Activated naive CD4-positive, alpha-beta T cell treated with anti-CD3 and anti-CD28 coated beads for 36 hours (primary cell): ENCODE measurements at regions of chr19 and their contacts with region 1.

Region 1: DNA sequence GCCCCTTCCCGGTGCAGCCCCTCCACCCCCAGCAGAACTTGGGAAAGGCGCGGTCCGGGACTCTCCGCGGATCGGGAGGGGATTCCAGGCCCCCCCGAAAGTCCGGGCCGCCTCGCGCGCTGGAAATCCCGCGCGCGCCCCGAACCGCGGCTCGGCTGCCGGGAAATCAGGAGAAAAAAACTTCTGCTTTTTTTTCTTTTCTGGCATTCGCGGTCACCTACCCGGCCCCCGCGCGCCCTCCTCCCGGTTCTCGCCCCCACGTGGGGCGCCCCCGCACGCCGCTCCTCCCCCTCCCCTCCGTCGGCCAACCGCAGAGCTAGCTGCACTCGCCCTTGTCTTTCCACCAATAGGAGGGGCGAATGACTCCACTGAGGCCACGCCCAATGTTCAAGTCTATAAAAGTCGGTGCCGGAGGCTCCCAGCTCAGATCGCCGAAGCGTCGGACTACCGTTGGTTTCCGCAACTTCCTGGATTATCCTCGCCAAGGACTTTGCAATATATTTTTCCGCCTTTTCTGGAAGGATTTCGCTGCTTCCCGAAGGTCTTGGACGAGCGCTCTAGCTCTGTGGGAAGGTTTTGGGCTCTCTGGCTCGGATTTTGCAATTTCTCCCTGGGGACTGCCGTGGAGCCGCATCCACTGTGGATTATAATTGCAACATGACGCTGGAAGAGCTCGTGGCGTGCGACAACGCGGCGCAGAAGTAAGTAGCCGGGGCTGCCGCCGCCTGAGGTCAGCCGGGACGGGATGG is at the start of gene GADD45B:
- DNase-seq: peak; percentile 98
- H3K4me3 Mint-ChIP-seq: peak within 1 kb of the TSS; percentile 99
- H3K27ac Mint-ChIP-seq: peak within 1 kb of the TSS; percentile 97
- H3K4me1 Mint-ChIP-seq: peaks cover 22% of the 10 kb centered on the region
- H3K27me3 Mint-ChIP-seq: no peaks in the 10 kb centered on the region
- total RNA-seq, gene GADD45B: 107 to 112 TPM

Region 2: GRCh38 chr19:2507109-2507508 is 31.2 kb after region 1 on chr19:
- CTCF ChIA-PET with region 1: interaction called, 4 read pairs
- intact Hi-C with region 1: loop called (anchors 1 kb)
- DNase-seq: peak; percentile 75
- H3K4me3 Mint-ChIP-seq: peak overlapping the region; percentile 39
- H3K27ac Mint-ChIP-seq: no peak overlapping the region
- H3K4me1 Mint-ChIP-seq: peaks cover 26% of the 10 kb centered on the region
- H3K27me3 Mint-ChIP-seq: peaks cover 2% of the 10 kb centered on the region

Region 3: DNA sequence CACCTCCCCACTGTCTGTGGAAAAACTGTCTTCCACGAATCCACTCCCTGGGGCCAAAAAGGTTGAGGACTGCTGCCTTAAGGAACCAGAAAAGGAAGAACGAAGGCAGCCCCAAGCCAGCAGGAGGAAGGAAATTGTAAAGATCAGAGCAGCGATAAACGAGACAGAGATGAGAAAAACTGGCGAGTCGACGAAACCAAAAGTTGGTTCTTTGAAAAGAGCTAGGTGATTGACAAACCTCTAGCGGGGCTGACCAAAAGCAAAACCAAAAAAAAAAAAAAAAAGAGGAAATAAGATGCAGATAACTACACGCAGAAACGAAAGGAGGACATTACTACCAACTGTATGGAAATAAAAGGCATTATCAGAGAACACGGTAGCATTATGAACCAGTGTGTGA is 77.0 kb after region 1 on chr19:
- CTCF ChIA-PET with region 1: interaction called, 5 read pairs
- intact Hi-C with region 1: loop called (anchors 1 kb)
- DNase-seq: peak; percentile 78
- H3K4me3 Mint-ChIP-seq: peak overlapping the region; percentile 64
- H3K27ac Mint-ChIP-seq: peak overlapping the region; percentile 81
- H3K4me1 Mint-ChIP-seq: peaks cover 17% of the 10 kb centered on the region
- H3K27me3 Mint-ChIP-seq: no peaks in the 10 kb centered on the region

Region 4: GRCh38 chr19:2578901-2579677 is 103.2 kb after region 1 on chr19:
- CTCF ChIA-PET with region 1: interaction called, 10 read pairs
- intact Hi-C with region 1: loop called (anchors 1 kb)
- DNase-seq: peak; percentile 80
- H3K4me3 Mint-ChIP-seq: peak overlapping the region; percentile 53
- H3K27ac Mint-ChIP-seq: no peak overlapping the region
- H3K4me1 Mint-ChIP-seq: peaks cover 3% of the 10 kb centered on the region
- H3K27me3 Mint-ChIP-seq: peaks cover 3% of the 10 kb centered on the region

Region 5: GRCh38 chr19:2610637-2611482 is 135.0 kb after region 1 on chr19:
- CTCF ChIA-PET with region 1: interaction called, 66 read pairs
- intact Hi-C with region 1: loop called (anchors 1 kb)
- DNase-seq: peak; percentile 95
- H3K4me3 Mint-ChIP-seq: peak overlapping the region; percentile 81
- H3K27ac Mint-ChIP-seq: peak overlapping the region; percentile 81
- H3K4me1 Mint-ChIP-seq: peaks cover 46% of the 10 kb centered on the region
- H3K27me3 Mint-ChIP-seq: peaks cover 4% of the 10 kb centered on the region

Region 6: GRCh38 chr19:2636897-2637683 is 161.2 kb after region 1 on chr19:
- CTCF ChIA-PET with region 1: interaction called, 5 read pairs
- intact Hi-C with region 1: loop called (anchors 1 kb)
- DNase-seq: peak; percentile 83
- H3K4me3 Mint-ChIP-seq: no peak overlapping the region
- H3K27ac Mint-ChIP-seq: no peak overlapping the region
- H3K4me1 Mint-ChIP-seq: peaks cover 13% of the 10 kb centered on the region
- H3K27me3 Mint-ChIP-seq: peaks cover 4% of the 10 kb centered on the region

Region 7: DNA sequence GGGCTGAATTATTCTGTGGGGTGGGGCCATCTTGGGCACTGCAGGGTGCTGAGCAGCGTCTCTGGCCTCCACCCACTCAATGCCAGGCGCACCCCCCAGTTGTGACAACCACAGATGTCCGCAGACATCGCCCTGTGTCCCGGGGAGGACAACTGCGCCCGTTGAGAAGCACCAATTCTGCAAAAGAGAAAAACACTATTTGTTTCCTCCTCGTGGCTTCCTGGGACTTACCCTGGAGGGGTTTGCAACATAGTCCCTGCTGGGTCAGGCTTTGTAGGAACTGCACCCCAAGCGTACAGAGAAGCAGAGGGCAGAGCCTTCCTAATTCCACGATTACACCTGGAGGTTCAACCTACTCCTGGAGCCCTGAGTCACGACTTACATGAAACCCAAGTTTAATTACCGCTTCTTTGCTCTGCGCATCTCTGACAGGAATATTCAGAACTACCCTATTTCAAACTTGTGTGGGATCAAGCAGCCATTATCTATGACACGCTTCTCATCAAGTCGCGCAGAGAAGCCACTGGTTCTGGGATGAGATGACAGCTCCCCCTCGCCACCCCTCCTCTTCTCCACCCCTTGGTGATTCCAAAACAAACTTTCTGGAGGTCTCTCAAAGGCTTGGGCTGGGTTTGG is 275.1 kb after region 1 on chr19:
- CTCF ChIA-PET with region 1: no interaction called
- intact Hi-C with region 1: no loop called
- DNase-seq: no peak
- H3K4me3 Mint-ChIP-seq: no peak overlapping the region
- H3K27ac Mint-ChIP-seq: no peak overlapping the region
- H3K4me1 Mint-ChIP-seq: no peaks in the 10 kb centered on the region
- H3K27me3 Mint-ChIP-seq: no peaks in the 10 kb centered on the region

Region 8: GRCh38 chr19:2977001-2977685 is 501.3 kb after region 1 on chr19 and contains the start of gene TLE6:
- CTCF ChIA-PET with region 1: no interaction called
- intact Hi-C with region 1: no loop called
- DNase-seq: peak; percentile 96
- H3K4me3 Mint-ChIP-seq: peak within 1 kb of the TSS; percentile 92
- H3K27ac Mint-ChIP-seq: peak within 1 kb of the TSS; percentile 18
- H3K4me1 Mint-ChIP-seq: peaks cover 15% of the 10 kb centered on the region
- H3K27me3 Mint-ChIP-seq: peaks cover 8% of the 10 kb centered on the region
- total RNA-seq, gene TLE6: 0.52 to 1.6 TPM